Calu3 (cell line): ENCODE measurements at regions of chr17 and their contacts with region 1.

Region 1: GRCh38 chr17:42819944-42820535 is 4.0 kb downstream of the BECN1 start:
- DNase-seq: peak; percentile 83
- H3K4me3 Mint-ChIP-seq: no peak overlapping the region
- H3K27ac Mint-ChIP-seq: no peak overlapping the region
- H3K4me1 Mint-ChIP-seq: peaks cover 6% of the 10 kb centered on the region
- H3K27me3 Mint-ChIP-seq: no peaks in the 10 kb centered on the region
- CTCF ChIP-seq: peak; percentile 84

Region 2: DNA sequence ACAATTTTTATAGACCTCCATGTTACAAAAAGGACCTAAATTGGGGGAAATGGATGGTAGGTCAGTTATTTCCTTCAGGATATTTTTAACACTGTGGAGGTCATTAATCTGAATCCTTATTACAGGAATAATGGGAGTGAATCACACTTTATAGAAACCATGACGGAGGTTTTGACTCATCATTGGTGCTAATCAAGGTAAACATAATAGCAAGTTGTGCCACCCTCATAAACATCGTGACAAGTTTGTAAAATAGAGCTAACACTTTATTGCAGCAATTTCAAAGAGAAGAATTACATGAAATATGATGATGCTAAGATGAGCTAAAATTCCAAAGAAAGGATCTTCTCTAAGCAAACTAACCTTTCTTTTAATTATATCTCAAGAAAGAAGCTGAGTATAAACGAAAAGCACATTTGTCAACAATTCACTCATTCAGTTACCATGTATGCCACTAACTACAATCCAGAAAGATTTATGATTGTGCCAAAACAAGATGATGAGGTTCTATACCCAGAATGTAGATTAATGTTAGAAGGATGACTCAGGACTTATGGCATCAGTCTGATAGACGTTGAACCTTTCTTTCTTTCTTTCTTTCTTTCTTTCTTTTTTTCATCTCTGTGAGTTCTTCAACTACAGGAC is 567.4 kb before region 1 on chr17:
- CTCF ChIA-PET with region 1: no interaction called
- intact Hi-C with region 1: no loop called
- DNase-seq: no peak
- H3K4me3 Mint-ChIP-seq: no peak overlapping the region
- H3K27ac Mint-ChIP-seq: no peak overlapping the region
- H3K4me1 Mint-ChIP-seq: no peaks in the 10 kb centered on the region
- H3K27me3 Mint-ChIP-seq: no peaks in the 10 kb centered on the region
- CTCF ChIP-seq: no peak

Region 3: GRCh38 chr17:42725143-42725542 is 94.9 kb before region 1 on chr17:
- CTCF ChIA-PET with region 1: no interaction called
- intact Hi-C with region 1: no loop called
- DNase-seq: no peak
- H3K4me3 Mint-ChIP-seq: no peak overlapping the region
- H3K27ac Mint-ChIP-seq: no peak overlapping the region
- H3K4me1 Mint-ChIP-seq: no peaks in the 10 kb centered on the region
- H3K27me3 Mint-ChIP-seq: no peaks in the 10 kb centered on the region
- CTCF ChIP-seq: no peak

Region 4: GRCh38 chr17:42832974-42833766 is 13.1 kb after region 1 on chr17 and contains the start of gene PSME3:
- CTCF ChIA-PET with region 1: interaction called, 15 read pairs
- intact Hi-C with region 1: no loop called
- DNase-seq: peak; percentile 94
- H3K4me3 Mint-ChIP-seq: peak within 1 kb of the TSS; percentile 88
- H3K27ac Mint-ChIP-seq: peak within 1 kb of the TSS; percentile 96
- H3K4me1 Mint-ChIP-seq: peaks cover 19% of the 10 kb centered on the region
- H3K27me3 Mint-ChIP-seq: peaks cover 6% of the 10 kb centered on the region
- CTCF ChIP-seq: no peak
- total RNA-seq, gene PSME3: 238 and 265 TPM in 2 replicates

Region 5: GRCh38 chr17:42928714-42929496 is 108.9 kb after region 1 on chr17:
- CTCF ChIA-PET with region 1: interaction called, 14 read pairs
- intact Hi-C with region 1: no loop called
- DNase-seq: peak; percentile 62
- H3K4me3 Mint-ChIP-seq: no peak overlapping the region
- H3K27ac Mint-ChIP-seq: peak overlapping the region; percentile 24
- H3K4me1 Mint-ChIP-seq: peaks cover 10% of the 10 kb centered on the region
- H3K27me3 Mint-ChIP-seq: peaks cover 10% of the 10 kb centered on the region
- CTCF ChIP-seq: peak; percentile 72